ENCODE measurements at regions of chr7 and their contacts with region 1.

Region 1: GRCh38 chr7:133497061-133497460 is 244.2 kb downstream of the EXOC4 start:
- DNase-seq: no peak
- H3K4me3 ChIP-seq: no peak overlapping the region
- H3K27me3 ChIP-seq: no peaks in the 10 kb centered on the region
- CTCF ChIP-seq: no peak

Region 2: DNA sequence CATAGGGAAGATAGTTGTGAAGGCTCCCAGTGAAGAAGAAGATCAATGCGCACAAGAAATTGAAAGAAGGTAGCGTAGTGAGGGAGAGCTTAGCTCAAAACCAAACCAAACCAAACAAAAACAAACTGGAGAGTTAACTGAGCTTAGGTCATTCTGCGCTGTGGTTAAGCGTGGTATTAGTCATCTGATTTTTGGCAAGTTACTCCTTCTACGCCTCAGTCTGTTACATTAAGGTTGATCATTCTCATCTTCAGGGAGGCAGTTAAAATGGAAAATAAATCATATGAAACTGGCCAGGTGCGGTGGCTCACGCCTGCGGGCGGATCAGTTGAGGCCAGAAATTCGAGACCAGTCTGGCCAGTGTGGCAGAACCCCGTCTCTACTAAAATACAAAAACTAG is 15.5 kb after region 1 on chr7:
- CTCF ChIA-PET with region 1: interaction called, 3 read pairs
- POLR2A ChIA-PET with region 1: interaction called, 17 read pairs
- DNase-seq: no peak
- H3K4me3 ChIP-seq: no peak overlapping the region
- H3K27me3 ChIP-seq: no peaks in the 10 kb centered on the region
- CTCF ChIP-seq: no peak

Measured in BJ (cell line).